GM12878 (cell line): ENCODE measurements at regions of chr11 and their contacts with region 1.

Region 1: DNA sequence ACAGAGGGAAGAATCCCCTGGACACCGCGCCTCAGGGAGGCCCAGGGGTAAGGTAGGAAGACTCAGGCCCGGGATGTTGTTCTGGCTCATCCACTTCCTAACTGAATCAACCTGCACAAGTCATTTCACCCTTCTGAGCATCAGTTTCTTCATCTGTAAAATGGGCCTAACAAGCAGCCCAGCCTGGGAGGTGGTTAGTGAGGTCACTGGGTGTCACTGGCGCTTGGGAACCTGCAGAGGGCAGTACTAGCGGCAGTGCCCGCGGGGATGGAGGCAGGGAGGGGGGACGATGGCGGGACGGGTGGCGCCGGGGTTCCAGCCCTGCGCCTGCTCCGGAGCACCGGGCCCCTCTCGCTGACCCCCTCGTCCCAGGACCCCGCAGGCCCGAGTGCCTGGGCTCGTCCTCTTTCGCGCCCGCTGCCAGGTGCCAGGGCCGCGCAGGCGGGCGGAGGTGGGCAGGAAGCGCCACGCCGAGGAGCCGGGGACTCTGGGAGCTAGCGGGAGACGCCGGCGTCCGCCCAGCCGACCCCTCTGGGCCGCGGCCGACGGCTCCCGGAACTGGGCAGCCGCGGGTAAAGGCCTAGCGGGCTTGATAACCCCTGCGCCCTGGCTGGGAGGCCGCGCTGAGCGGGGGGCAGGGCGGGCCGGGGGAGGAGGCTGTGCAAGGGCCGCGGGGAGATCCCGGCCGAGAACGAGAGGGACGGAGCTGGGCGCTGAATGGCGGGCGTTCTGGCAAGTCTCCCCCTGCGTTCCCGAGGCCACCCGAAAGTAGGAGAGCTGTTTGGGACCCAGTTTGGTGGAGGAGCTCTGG is at the start of gene NLRX1:
- DNase-seq: peak; percentile 40
- ATAC-seq: peak; percentile 98
- H3K4me3 ChIP-seq: peak within 1 kb of the TSS; percentile 92
- H3K27ac ChIP-seq: peak within 1 kb of the TSS; percentile 82
- H3K4me1 ChIP-seq: peaks cover 4% of the 10 kb centered on the region; the same call in 1 of the 2 replicates
- H3K27me3 ChIP-seq: no peaks in the 10 kb centered on the region
- CTCF ChIP-seq: peak; percentile 86 to 97 (median 95)
- EP300 ChIP-seq: no peak
- POLR2A ChIP-seq: peak; percentile 90
- RAD21 ChIP-seq: peak; percentile 56
- polyA plus RNA-seq, gene NLRX1: 0.85 to 1.0 TPM

Region 2: GRCh38 chr11:118827118-118827517 is 341.6 kb before region 1 on chr11:
- CTCF ChIA-PET with region 1: no interaction called
- POLR2A ChIA-PET with region 1: no interaction called
- RAD21 ChIA-PET with region 1: no interaction called
- SMC1A ChIA-PET with region 1: no interaction called
- in situ Hi-C with region 1: no loop called
- intact Hi-C with region 1: no loop called
- DNase-seq: no peak
- ATAC-seq: no peak
- H3K4me3 ChIP-seq: no peak overlapping the region
- H3K27ac ChIP-seq: no peak overlapping the region
- H3K4me1 ChIP-seq: peaks cover 19% of the 10 kb centered on the region
- H3K27me3 ChIP-seq: no peaks in the 10 kb centered on the region
- CTCF ChIP-seq: no peak
- EP300 ChIP-seq: no peak
- POLR2A ChIP-seq: no peak
- RAD21 ChIP-seq: no peak

Region 3: GRCh38 chr11:119121008-119121810 is 47.5 kb before region 1 on chr11 and contains the start of gene HINFP:
- CTCF ChIA-PET with region 1: interaction called, 3 read pairs
- POLR2A ChIA-PET with region 1: interaction called, 12 read pairs
- RAD21 ChIA-PET with region 1: no interaction called
- SMC1A ChIA-PET with region 1: interaction called, 3 read pairs
- in situ Hi-C with region 1: no loop called
- intact Hi-C with region 1: no loop called
- DNase-seq: peak; percentile 99
- ATAC-seq: peak; percentile 99
- H3K4me3 ChIP-seq: peak within 1 kb of the TSS; percentile 92
- H3K27ac ChIP-seq: peak within 1 kb of the TSS; percentile 65
- H3K4me1 ChIP-seq: peaks cover 13% of the 10 kb centered on the region
- H3K27me3 ChIP-seq: no peaks in the 10 kb centered on the region
- CTCF ChIP-seq: no peak
- EP300 ChIP-seq: no peak
- POLR2A ChIP-seq: peak; percentile 83
- RAD21 ChIP-seq: no peak
- polyA plus RNA-seq, gene HINFP: 13.1 to 18.9 TPM

Region 4: GRCh38 chr11:119196833-119197483 is 28.3 kb after region 1 on chr11:
- CTCF ChIA-PET with region 1: interaction called, 28 read pairs
- POLR2A ChIA-PET with region 1: interaction called, 5 read pairs
- RAD21 ChIA-PET with region 1: interaction called, 5 read pairs
- SMC1A ChIA-PET with region 1: interaction called, 12 read pairs
- in situ Hi-C with region 1: no loop called
- intact Hi-C with region 1: no loop called
- DNase-seq: peak; percentile 59
- ATAC-seq: peak; percentile 97
- H3K4me3 ChIP-seq: no peak overlapping the region
- H3K27ac ChIP-seq: no peak overlapping the region
- H3K4me1 ChIP-seq: no peaks in the 10 kb centered on the region
- H3K27me3 ChIP-seq: 0 out of 4 replicates have a peak, but pooled peaks cover 0 to 2% of the 10 kb centered on the region in 2 experiments
- CTCF ChIP-seq: peak; percentile 75 to 92 (median 84)
- EP300 ChIP-seq: no peak
- POLR2A ChIP-seq: no peak
- RAD21 ChIP-seq: peak; percentile 92

Region 5: DNA sequence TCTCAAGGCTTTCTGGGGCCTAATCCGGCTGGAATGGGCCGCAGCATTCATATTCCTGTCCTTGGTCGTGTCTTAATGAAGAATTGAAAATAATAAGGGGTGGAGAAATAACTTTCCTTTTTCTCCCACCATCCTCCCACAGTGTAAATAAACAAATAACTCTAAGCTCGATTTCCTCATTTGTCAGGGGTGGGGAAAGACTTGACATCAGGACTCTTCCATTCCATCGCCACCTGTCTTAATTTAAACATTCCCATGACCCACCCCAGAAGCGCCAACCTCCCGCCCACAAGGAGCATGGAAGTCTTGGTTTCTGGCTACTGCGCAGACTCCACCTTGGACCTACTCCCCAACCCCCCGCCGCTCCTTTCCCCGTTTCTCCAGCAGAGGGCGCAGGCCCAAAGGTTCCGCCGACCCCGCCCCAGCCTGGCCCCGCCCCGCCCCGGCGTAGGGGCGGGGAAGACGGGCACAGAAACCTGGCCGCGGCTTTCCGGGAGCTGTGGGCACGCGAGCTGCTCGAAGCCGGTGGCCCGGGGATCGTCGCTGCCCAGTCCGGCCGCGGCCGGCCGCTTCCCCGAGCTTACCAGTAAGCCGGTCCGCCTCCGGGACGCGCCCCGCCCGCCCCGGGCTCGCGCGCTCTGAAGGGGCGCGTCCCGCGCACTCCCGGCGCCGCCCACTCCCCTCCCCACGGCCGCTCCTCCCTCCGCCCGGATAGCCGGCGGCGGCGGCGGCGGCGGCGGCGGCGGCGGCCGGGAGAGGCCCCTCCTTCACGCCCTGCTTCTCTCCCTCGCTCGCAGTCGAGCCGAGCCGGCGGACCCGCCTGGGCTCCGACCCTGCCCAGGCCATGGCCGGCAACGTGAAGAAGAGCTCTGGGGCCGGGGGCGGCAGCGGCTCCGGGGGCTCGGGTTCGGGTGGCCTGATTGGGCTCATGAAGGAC is 37.2 kb after region 1 on chr11 and contains the start of gene CBL:
- CTCF ChIA-PET with region 1: interaction called, 17 read pairs
- POLR2A ChIA-PET with region 1: no interaction called
- RAD21 ChIA-PET with region 1: interaction called, 4 read pairs
- SMC1A ChIA-PET with region 1: interaction called, 3 read pairs
- in situ Hi-C with region 1: no loop called
- intact Hi-C with region 1: no loop called
- DNase-seq: peak; percentile 47
- ATAC-seq: peak; percentile 91
- H3K4me3 ChIP-seq: peak within 1 kb of the TSS; percentile 93
- H3K27ac ChIP-seq: peak within 1 kb of the TSS; percentile 88
- H3K4me1 ChIP-seq: peaks cover 9% of the 10 kb centered on the region
- H3K27me3 ChIP-seq: no peaks in the 10 kb centered on the region
- CTCF ChIP-seq: peak; percentile 85 to 92 (median 91)
- EP300 ChIP-seq: no peak
- POLR2A ChIP-seq: peak; percentile 81
- RAD21 ChIP-seq: peak; percentile 62
- polyA plus RNA-seq, gene CBL: 3.9 to 7.6 TPM

Region 6: GRCh38 chr11:119284344-119285157 is 115.9 kb after region 1 on chr11:
- CTCF ChIA-PET with region 1: interaction called, 7 read pairs
- POLR2A ChIA-PET with region 1: interaction called, 11 read pairs
- RAD21 ChIA-PET with region 1: interaction called, 4 read pairs
- SMC1A ChIA-PET with region 1: interaction called, 3 read pairs
- in situ Hi-C with region 1: no loop called
- intact Hi-C with region 1: no loop called
- DNase-seq: no peak
- ATAC-seq: peak; percentile 93
- H3K4me3 ChIP-seq: no peak overlapping the region
- H3K27ac ChIP-seq: no peak overlapping the region
- H3K4me1 ChIP-seq: no peaks in the 10 kb centered on the region
- H3K27me3 ChIP-seq: no peaks in the 10 kb centered on the region
- CTCF ChIP-seq: peak; percentile 48 to 75 (median 55)
- EP300 ChIP-seq: no peak
- POLR2A ChIP-seq: no peak
- RAD21 ChIP-seq: peak; percentile 82

Region 7: GRCh38 chr11:119795231-119795630 is 626.6 kb after region 1 on chr11:
- CTCF ChIA-PET with region 1: no interaction called
- POLR2A ChIA-PET with region 1: no interaction called
- RAD21 ChIA-PET with region 1: no interaction called
- SMC1A ChIA-PET with region 1: no interaction called
- in situ Hi-C with region 1: no loop called
- intact Hi-C with region 1: no loop called
- DNase-seq: no peak
- ATAC-seq: no peak
- H3K4me3 ChIP-seq: no peak overlapping the region
- H3K27ac ChIP-seq: no peak overlapping the region
- H3K4me1 ChIP-seq: no peaks in the 10 kb centered on the region
- H3K27me3 ChIP-seq: no peaks in the 10 kb centered on the region
- CTCF ChIP-seq: no peak
- EP300 ChIP-seq: no peak
- POLR2A ChIP-seq: no peak
- RAD21 ChIP-seq: no peak